Gastrocnemius medialis (tissue), 4 donors: ENCODE measurements at regions of chr2 and their contacts with region 1.

Region 1: DNA sequence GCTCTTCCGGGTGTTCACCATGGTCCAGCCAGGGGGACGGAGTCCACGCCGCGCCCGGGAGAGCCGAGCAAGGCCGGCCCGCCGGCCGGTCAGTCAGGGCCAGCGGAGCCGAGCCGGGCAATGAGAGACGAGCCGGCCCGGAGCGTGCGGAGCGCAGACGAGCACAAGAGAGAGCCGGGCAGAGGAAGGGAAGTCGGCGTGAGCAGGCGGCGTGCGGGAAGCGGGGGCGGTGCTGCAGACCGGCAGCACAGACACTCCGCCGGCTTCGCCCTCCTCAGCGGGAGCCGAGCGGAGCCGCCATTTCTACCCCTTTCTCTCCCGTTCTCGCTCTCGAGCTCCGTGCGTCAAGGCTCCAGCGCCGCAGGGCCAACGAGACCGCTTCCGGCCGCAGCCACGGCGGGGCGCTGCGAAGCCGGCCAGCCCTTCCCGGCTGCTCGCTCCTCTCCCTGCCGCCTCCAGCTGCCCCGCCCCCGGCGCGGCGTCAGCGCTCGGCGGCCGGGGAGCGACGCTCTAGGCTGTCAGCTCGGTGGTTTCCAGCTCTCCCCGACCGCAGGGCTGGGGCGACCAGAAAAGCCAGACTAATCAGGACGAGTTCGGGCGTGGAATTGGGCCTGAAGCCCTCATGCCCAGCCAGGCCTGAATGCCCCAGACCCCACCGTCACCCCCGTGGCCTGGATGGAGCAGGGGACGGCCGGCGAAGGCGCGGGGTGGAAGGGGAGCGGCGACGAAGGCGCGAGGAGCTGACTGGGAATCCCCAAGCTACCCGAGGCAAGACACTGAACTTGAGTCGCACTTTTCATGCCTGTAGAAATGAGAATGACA is at the start of gene ATAD2B:
- DNase-seq: peak; percentile 77 to 90
- ATAC-seq: peak; percentile 89 to 91
- H3K4me3 ChIP-seq: peak within 1 kb of the TSS; percentile 81 to 93 (median 88)
- H3K27ac ChIP-seq: peak within 1 kb of the TSS; percentile 92 to 94 (median 94)
- H3K4me1 ChIP-seq: peaks cover 27 to 31% of the 10 kb centered on the region in 2 donors
- H3K27me3 ChIP-seq: no peaks in the 10 kb centered on the region
- CTCF ChIP-seq: peak; percentile 83 to 94 (median 93)
- POLR2A ChIP-seq: peak; percentile 76 to 82
- total RNA-seq, gene ATAD2B: 7.3 to 18.1 (median 7.7) TPM

Region 2: GRCh38 chr2:23939987-23940717 is 13.2 kb after region 1 on chr2 and contains the start of gene UBXN2A:
- in situ Hi-C with region 1: no loop called
- intact Hi-C with region 1: loop called (anchors 1 kb)
- DNase-seq: peak; percentile 35 to 70
- ATAC-seq: peak; percentile 87 to 90
- H3K4me3 ChIP-seq: peak within 1 kb of the TSS; percentile 58 to 84 (median 77)
- H3K27ac ChIP-seq: peak within 1 kb of the TSS; percentile 88 to 96 (median 94)
- H3K4me1 ChIP-seq: peaks cover 29 to 30% of the 10 kb centered on the region in 2 donors
- H3K27me3 ChIP-seq: no peaks in the 10 kb centered on the region
- CTCF ChIP-seq: peak in 1 of 5 experiments; percentile 3
- POLR2A ChIP-seq: peak; percentile 85 to 88
- total RNA-seq, gene UBXN2A: 13.7 to 20.8 (median 17.0) TPM

Region 3: GRCh38 chr2:24046930-24047702 is 120.2 kb after region 1 on chr2 and contains the start of gene WDCP:
- in situ Hi-C with region 1: loop called in 1 of 4 experiments (anchors 25 kb)
- intact Hi-C with region 1: loop called (anchors 2 kb)
- DNase-seq: peak; percentile 97
- ATAC-seq: peak; percentile 100
- H3K4me3 ChIP-seq: peak within 1 kb of the TSS; percentile 68 to 98 (median 90)
- H3K27ac ChIP-seq: peak within 1 kb of the TSS; percentile 79 to 85 (median 82)
- H3K4me1 ChIP-seq: peaks cover 19 to 27% of the 10 kb centered on the region in 2 donors
- H3K27me3 ChIP-seq: peaks cover 8 to 21% (median 18%) of the 10 kb centered on the region in 3 donors
- CTCF ChIP-seq: no peak
- POLR2A ChIP-seq: peak; percentile 47 to 80
- total RNA-seq, gene WDCP: 4.8 to 8.4 (median 8.3) TPM

Region 4: DNA sequence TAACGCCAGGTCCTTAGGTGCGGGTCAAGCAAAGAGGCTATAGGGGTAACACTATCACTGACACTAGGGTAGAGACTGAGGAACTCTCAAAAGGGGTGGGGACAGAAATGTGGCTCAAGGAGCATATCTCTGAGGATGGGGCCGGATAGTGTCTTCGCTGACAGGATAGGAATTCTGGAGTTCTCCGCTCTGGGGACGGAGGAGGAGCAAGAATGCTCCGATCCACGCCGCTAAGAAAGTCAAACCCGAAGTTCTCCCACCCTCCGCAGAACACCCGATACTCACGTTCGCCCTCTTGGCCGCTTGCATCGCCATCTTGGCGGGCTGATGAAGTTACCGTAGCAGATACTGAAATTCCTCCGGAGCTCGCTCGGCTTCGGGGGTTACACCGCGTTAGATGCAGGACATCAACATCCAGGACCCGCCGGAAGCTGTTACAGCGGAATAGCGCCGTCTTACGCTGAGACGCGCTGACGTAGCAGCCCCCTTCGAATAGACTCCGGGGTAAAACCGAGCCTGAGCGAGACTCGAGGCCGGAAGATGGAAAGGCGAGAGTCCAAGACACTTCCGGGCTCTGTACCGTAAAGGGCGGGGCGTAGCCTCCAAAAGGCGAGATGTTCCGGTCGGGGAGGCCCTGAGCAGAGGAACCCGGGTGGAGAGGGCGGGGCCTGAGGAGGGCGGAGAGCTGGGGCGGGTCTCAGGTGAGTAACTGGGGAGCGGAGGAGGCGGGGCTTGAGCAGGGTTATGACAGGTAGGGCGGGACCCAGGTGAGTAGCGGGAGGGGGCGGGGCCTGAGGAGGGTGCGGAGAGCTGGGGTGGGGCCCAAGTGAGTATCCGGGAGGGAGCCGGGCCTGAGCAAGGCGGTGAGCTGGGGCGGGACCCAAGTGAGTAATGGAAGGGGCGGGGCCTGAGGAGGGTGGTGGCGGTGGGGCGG is 149.2 kb after region 1 on chr2 and contains the start of gene SF3B6:
- in situ Hi-C with region 1: loop called in 3 of 4 experiments (anchors 5 to 10 kb)
- intact Hi-C with region 1: loop called (anchors 2 kb)
- DNase-seq: peak; percentile 96 to 98
- ATAC-seq: peak; percentile 96 to 97
- H3K4me3 ChIP-seq: peak within 1 kb of the TSS; percentile 80 to 92 (median 84)
- H3K27ac ChIP-seq: peak within 1 kb of the TSS; percentile 84 to 90 (median 87)
- H3K4me1 ChIP-seq: peaks cover 21 to 22% of the 10 kb centered on the region in 2 donors
- H3K27me3 ChIP-seq: no peaks in the 10 kb centered on the region
- CTCF ChIP-seq: no peak
- POLR2A ChIP-seq: peak; percentile 51 to 58
- total RNA-seq, gene SF3B6: 55.2 to 88.1 (median 70.5) TPM

Region 5: DNA sequence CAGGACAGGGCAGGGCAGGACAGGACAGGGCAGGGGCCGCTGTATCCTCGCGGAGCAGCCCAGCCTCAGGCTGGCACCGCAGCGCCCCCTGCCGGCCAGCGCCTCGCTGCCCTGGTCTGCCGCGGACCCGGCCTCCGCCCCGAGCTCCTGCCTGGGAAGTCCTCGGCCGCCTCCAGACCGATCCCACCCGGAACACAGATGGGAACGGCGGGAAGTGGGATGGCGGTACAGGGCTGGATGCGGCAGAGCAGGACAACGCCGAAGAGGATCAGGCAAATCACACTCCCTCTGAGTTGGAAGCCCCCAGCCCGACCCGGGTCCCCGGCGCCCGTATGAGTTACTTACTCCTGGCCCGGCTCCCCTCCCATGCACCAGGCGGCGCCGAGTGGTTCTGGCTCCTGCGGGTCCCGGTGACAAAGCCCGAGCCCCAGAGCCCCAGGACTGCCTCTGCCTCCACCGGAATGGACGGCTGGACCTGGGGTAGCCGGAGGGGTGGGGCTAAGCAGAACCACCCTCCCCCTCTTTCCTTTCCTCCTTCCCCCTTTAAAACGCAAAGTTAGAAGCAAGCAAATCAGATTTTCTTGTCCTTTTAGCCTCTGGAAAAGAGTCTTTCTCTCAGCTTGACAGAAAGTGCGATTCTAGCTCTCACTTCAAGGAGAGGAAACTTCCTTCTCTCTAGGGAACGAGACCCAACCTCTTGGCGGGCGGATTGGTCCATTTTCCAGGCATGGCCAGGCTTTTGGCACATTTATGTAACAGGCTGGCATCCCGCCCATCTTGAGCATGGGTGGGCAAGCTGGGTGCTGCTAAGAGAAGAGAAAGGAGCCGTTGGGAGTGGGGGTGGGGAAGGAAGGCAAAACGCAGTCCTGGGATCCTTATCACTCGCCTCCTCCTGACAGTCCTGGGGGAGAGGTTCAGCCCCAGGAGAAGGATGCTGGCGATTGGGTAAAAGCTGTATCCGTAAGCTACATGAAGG is 157.7 kb after region 1 on chr2 and contains the start of gene TP53I3:
- in situ Hi-C with region 1: loop called in 3 of 4 experiments (anchors 5 to 10 kb)
- intact Hi-C with region 1: loop called (anchors 1 kb)
- DNase-seq: peak; percentile 71 to 90
- ATAC-seq: peak; percentile 93 to 95
- H3K4me3 ChIP-seq: peak within 1 kb of the TSS; percentile 50 to 68 (median 62)
- H3K27ac ChIP-seq: peak within 1 kb of the TSS; percentile 67 to 82 (median 74)
- H3K4me1 ChIP-seq: peaks cover 8 to 12% of the 10 kb centered on the region in 2 donors
- H3K27me3 ChIP-seq: no peaks in the 10 kb centered on the region
- CTCF ChIP-seq: peak; percentile 92 to 98 (median 97)
- POLR2A ChIP-seq: peak; percentile 47 to 72
- total RNA-seq, gene TP53I3: 3.3 to 7.6 (median 4.9) TPM

Region 6: GRCh38 chr2:24111407-24111901 is 184.5 kb after region 1 on chr2:
- in situ Hi-C with region 1: no loop called
- intact Hi-C with region 1: no loop called
- DNase-seq: no peak
- ATAC-seq: no peak
- H3K4me3 ChIP-seq: no peak overlapping the region
- H3K27ac ChIP-seq: no peak overlapping the region
- H3K4me1 ChIP-seq: no peaks in the 10 kb centered on the region
- H3K27me3 ChIP-seq: no peaks in the 10 kb centered on the region
- CTCF ChIP-seq: no peak
- POLR2A ChIP-seq: no peak

Region 7: GRCh38 chr2:24359129-24360049 is 432.4 kb after region 1 on chr2:
- in situ Hi-C with region 1: no loop called
- intact Hi-C with region 1: loop called (anchors 10 kb)
- DNase-seq: peak; percentile 70 to 81
- ATAC-seq: peak; percentile 83 to 85
- H3K4me3 ChIP-seq: peak overlapping the region; percentile 71 to 99 (median 78)
- H3K27ac ChIP-seq: peak overlapping the region; percentile 89 to 99 (median 94)
- H3K4me1 ChIP-seq: peaks cover 22% of the 10 kb centered on the region in 2 donors
- H3K27me3 ChIP-seq: no peaks in the 10 kb centered on the region
- CTCF ChIP-seq: no peak
- POLR2A ChIP-seq: peak; percentile 70 to 81